PC-3 (cell line): ENCODE measurements at regions of chr7 and their contacts with region 1.

Region 1: DNA sequence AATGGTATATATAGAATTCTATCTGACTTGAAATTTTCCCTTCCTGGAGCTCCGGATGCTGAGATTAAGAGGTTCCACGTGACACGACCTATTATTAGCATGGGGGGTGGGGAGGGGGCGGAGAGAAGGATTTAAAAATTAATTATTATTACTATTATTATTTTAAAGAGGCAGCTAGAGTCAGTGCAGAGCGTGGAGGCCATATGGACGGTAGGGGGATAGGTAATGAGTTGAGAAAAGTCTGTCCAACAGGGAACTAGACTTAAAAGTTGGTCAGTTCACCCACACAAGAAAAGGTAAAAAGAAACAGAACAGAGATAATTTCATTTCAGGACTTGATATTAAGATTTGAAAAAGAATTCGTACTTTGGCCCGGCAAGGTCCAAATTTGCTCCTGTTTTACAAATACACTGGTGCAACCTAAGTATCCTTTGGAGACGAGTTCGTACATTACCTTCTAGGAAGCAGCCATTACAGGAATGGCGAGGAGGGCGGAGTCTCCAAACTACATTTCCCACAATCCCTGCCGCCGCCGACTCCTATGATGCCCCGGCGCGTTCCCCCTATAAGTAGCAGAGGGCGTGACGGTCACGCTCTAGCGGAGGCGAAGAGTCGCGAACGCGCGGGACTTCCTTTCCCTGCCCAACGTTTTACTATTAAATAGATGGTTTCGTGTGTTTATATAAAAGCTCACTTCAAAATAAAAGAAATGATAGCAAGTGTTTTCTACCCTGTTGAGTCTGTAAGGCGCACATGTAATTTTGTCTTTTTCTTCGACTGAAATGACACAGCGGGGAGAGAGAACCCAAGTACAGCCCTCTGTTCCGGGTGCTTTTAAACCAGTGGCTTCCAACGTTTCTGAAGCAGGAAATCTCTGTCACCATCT is at the start of gene SMIM30:
- DNase-seq: peak; percentile 81
- ATAC-seq: peak; percentile 100
- H3K4me3 ChIP-seq: peak within 1 kb of the TSS; percentile 91
- H3K27ac ChIP-seq: no peak within 1 kb of the TSS
- H3K4me1 ChIP-seq: peaks cover 4% of the 10 kb centered on the region; the same call in 1 of the 2 replicates
- H3K27me3 ChIP-seq: no peaks in the 10 kb centered on the region
- CTCF ChIP-seq: no peak
- total RNA-seq, gene SMIM30: 28.9 and 29.4 TPM in 2 replicates

Region 2: GRCh38 chr7:112630565-112630964 is 487.8 kb before region 1 on chr7:
- CTCF ChIA-PET with region 1: no interaction called
- POLR2A ChIA-PET with region 1: no interaction called
- intact Hi-C with region 1: loop called (anchors 1 kb)
- DNase-seq: peak; percentile 56
- ATAC-seq: peak; percentile 92
- H3K4me3 ChIP-seq: no peak overlapping the region
- H3K27ac ChIP-seq: peak overlapping the region; percentile 36; the same call in 1 of the 2 replicates
- H3K4me1 ChIP-seq: peaks cover 13% of the 10 kb centered on the region
- H3K27me3 ChIP-seq: 0 out of 2 replicates have a peak, but pooled peaks cover 3% of the 10 kb centered on the region
- CTCF ChIP-seq: no peak

Region 3: GRCh38 chr7:112939574-112940314 is 178.6 kb before region 1 on chr7:
- CTCF ChIA-PET with region 1: no interaction called
- POLR2A ChIA-PET with region 1: no interaction called
- intact Hi-C with region 1: loop called (anchors 10 kb)
- DNase-seq: peak; percentile 98
- ATAC-seq: peak; percentile 96
- H3K4me3 ChIP-seq: peak overlapping the region; percentile 89
- H3K27ac ChIP-seq: no peak overlapping the region
- H3K4me1 ChIP-seq: peaks cover 5% of the 10 kb centered on the region; the same call in 1 of the 2 replicates
- H3K27me3 ChIP-seq: no peaks in the 10 kb centered on the region
- CTCF ChIP-seq: no peak

Region 4: GRCh38 chr7:113188396-113188795 is 70.1 kb after region 1 on chr7:
- CTCF ChIA-PET with region 1: no interaction called
- POLR2A ChIA-PET with region 1: no interaction called
- intact Hi-C with region 1: no loop called
- DNase-seq: no peak
- ATAC-seq: no peak
- H3K4me3 ChIP-seq: no peak overlapping the region
- H3K27ac ChIP-seq: no peak overlapping the region
- H3K4me1 ChIP-seq: no peaks in the 10 kb centered on the region
- H3K27me3 ChIP-seq: no peaks in the 10 kb centered on the region
- CTCF ChIP-seq: no peak